HCT116 (cell line): ENCODE measurements at regions of chr12 and their contacts with region 1.

Region 1: GRCh38 chr12:16112612-16113560 is 164.6 kb downstream of the SLC15A5 start:
- DNase-seq: no peak
- ATAC-seq: no peak
- H3K4me3 ChIP-seq: no peak overlapping the region
- H3K27ac ChIP-seq: no peak overlapping the region
- H3K4me1 ChIP-seq: no peaks in the 10 kb centered on the region
- H3K27me3 ChIP-seq: no peaks in the 10 kb centered on the region
- CTCF ChIP-seq: 0 out of 6 replicates have a peak, but pooled peaks of 1 of the 3 experiments have one; percentile 10
- POLR2A ChIP-seq: no peak
- RAD21 ChIP-seq: no peak

Region 2: DNA sequence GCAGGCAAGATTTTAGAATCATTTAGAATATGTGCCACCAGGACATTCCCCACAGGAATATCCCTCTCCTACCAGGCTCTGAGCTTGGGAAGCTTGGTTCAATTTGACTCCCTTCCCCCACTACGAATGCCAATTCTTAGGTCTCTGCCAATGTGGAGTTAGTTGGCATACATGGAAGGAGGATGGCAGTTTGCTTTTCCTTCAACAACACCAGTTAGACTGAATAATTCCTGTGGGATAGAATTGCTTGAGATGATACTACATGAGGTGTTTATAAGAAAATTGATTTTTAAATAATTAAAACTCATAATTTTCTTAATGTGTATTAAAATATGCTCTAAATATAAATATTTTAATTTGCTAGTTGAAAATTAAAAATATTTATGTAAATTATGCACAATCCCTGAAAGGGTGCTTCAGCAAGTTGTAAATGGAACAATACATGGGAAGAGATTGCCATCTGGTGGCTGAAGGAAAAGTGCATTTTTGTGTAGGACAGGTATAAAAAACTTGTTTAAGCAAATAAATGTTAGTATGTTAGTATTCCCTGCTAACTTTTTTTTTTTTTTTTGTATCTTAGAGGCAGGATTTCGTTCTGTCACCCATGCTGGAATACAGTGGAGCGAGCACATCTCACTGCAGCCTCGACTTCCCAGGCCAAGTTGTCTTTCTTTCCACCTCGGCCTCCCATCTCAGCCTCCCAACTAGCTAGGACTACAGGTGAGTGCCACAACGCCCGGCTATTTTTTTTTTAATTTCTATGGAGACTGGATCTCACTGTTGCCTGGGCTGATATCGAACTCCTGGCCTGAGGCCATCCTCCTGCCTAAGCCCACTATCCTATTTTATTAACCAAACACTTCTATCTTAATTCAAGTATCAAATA is 256.5 kb before region 1 on chr12:
- CTCF ChIA-PET with region 1: no interaction called
- POLR2A ChIA-PET with region 1: no interaction called
- RAD21 ChIA-PET with region 1: no interaction called
- intact Hi-C with region 1: no loop called
- DNase-seq: peak; percentile 68
- ATAC-seq: peak; percentile 84
- H3K4me3 ChIP-seq: no peak overlapping the region
- H3K27ac ChIP-seq: no peak overlapping the region
- H3K4me1 ChIP-seq: peaks cover 2 to 13% of the 10 kb centered on the region in 2 experiments; a peak in 3 of 4 replicates
- H3K27me3 ChIP-seq: no peaks in the 10 kb centered on the region
- CTCF ChIP-seq: peak; percentile 54 to 94 (median 68)
- POLR2A ChIP-seq: no peak
- RAD21 ChIP-seq: peak; percentile 97

Region 3: DNA sequence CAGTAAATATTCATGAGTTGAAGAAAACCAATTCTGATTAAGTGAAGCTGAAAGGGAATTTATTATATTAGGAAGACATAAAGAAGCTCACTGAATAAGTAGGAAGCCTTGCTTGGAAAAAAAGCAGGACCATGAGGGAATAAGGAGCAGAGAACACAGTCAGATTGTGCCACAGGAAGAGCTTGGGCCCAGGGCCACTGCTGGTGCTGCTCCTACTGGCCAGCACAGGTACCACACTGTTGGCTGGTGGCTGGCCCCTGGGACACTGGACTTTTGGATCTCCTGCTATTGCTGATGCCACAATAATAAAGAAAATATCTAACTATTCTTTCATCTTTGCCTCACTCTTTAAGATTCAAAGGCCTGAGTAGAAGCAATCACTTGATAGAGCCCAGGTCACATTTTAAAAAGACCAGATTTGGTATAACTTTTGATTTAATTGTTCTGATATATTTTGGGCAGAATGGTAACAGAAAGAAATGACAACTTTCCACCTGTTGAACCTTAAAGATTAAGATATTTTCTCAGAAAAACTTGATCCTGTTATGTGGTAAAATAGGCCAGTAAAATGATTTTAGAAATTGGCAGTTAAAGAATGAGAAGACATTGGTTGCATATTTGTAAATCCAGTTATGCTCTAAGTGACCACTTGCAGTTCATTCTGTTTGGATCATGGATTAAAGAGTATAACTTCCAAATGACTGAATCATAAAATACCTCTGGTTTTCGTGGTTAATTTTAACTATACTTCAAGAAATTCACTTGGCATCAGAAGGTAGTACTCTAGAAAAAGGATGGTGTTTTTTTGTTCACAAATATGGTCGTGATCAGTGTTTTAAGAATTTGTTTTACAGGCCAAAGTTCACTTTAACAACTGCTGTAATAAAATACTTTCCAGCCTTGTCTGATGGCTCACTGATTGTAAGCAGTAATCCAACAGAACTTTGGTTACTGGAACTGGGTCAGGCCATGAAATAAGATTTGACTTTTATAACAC is 133.5 kb before region 1 on chr12:
- CTCF ChIA-PET with region 1: no interaction called
- POLR2A ChIA-PET with region 1: no interaction called
- RAD21 ChIA-PET with region 1: no interaction called
- intact Hi-C with region 1: no loop called
- DNase-seq: no peak
- ATAC-seq: peak; percentile 99
- H3K4me3 ChIP-seq: no peak overlapping the region
- H3K27ac ChIP-seq: no peak overlapping the region
- H3K4me1 ChIP-seq: peaks cover 0 to 7% of the 10 kb centered on the region in 2 experiments; a peak in 1 of 4 replicates
- H3K27me3 ChIP-seq: no peaks in the 10 kb centered on the region
- CTCF ChIP-seq: peak in 2 of 3 experiments; percentile 73 to 82; a peak in 4 of 6 replicates
- POLR2A ChIP-seq: no peak
- RAD21 ChIP-seq: peak; percentile 26

Region 4: GRCh38 chr12:16094437-16094836 is 18.4 kb before region 1 on chr12:
- CTCF ChIA-PET with region 1: no interaction called
- POLR2A ChIA-PET with region 1: no interaction called
- RAD21 ChIA-PET with region 1: no interaction called
- intact Hi-C with region 1: loop called (anchors 2 kb)
- DNase-seq: no peak
- ATAC-seq: no peak
- H3K4me3 ChIP-seq: no peak overlapping the region
- H3K27ac ChIP-seq: no peak overlapping the region
- H3K4me1 ChIP-seq: no peaks in the 10 kb centered on the region
- H3K27me3 ChIP-seq: no peaks in the 10 kb centered on the region
- CTCF ChIP-seq: no peak
- POLR2A ChIP-seq: no peak
- RAD21 ChIP-seq: no peak

Region 5: GRCh38 chr12:16246264-16246663 is 133.4 kb after region 1 on chr12:
- CTCF ChIA-PET with region 1: no interaction called
- POLR2A ChIA-PET with region 1: no interaction called
- RAD21 ChIA-PET with region 1: no interaction called
- intact Hi-C with region 1: no loop called
- DNase-seq: no peak
- ATAC-seq: no peak
- H3K4me3 ChIP-seq: no peak overlapping the region
- H3K27ac ChIP-seq: no peak overlapping the region
- H3K4me1 ChIP-seq: no peaks in the 10 kb centered on the region
- H3K27me3 ChIP-seq: no peaks in the 10 kb centered on the region
- CTCF ChIP-seq: no peak
- POLR2A ChIP-seq: no peak
- RAD21 ChIP-seq: no peak

Region 6: GRCh38 chr12:16492240-16492639 is 379.4 kb after region 1 on chr12:
- CTCF ChIA-PET with region 1: no interaction called
- POLR2A ChIA-PET with region 1: no interaction called
- RAD21 ChIA-PET with region 1: no interaction called
- intact Hi-C with region 1: no loop called
- DNase-seq: no peak
- ATAC-seq: no peak
- H3K4me3 ChIP-seq: no peak overlapping the region
- H3K27ac ChIP-seq: no peak overlapping the region
- H3K4me1 ChIP-seq: no peaks in the 10 kb centered on the region
- H3K27me3 ChIP-seq: no peaks in the 10 kb centered on the region
- CTCF ChIP-seq: 0 out of 6 replicates have a peak, but pooled peaks of 1 of the 3 experiments have one; percentile 9
- POLR2A ChIP-seq: no peak
- RAD21 ChIP-seq: peak; percentile 8; the same call in 1 of the 2 replicates